Right ventricle myocardium inferior (tissue), 1 donor: ENCODE measurements at regions of chr19 and their contacts with region 1.

Region 1: DNA sequence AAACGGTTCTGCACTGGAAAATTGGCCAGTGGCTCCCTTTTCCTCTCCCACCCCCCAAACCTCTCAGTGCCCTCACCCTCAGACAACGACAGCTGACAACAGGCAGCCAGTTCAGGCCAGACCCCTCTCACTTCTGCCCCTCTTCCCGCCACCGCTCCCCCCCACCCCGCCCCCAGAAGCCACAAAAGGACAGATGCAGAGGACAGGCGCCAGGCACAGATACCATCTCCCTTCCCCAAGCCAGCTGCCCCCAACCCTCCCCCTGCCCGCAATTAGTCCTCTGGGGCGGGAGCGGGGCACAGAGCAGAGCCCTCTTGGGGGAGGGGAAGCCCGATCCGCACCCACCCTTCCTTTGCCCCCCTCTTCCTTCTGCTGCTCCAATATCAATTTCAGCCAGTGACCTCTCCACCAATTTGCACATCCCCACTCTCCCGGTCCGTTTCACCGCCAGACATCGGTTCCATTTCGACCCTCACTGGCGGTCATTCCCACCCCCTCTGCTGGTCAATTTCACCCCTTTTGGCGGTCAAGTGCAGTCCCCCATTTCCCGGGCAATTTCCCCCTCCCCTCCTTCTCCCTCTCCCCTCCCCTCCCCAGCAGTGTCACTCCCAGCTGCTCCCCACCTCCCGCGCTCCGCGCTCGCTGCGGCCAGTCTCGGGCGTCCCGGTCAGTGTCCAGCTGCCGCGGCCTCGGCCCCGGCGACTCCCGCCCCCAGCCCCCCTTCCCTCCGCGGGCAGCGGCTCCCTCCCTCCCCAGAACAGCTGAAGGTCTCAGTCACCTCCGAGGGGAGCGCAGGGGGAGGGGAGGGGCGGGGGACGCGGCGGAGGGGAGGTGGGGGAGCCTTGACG is at the start of gene SHD:
- DNase-seq: peak; percentile 0
- ATAC-seq: no peak
- total RNA-seq, gene SHD: not detected

Region 2: GRCh38 chr19:4267101-4267900 is 11.3 kb before region 1 on chr19:
- intact Hi-C with region 1: no loop called
- DNase-seq: peak; percentile 79
- ATAC-seq: peak; percentile 63

Region 3: DNA sequence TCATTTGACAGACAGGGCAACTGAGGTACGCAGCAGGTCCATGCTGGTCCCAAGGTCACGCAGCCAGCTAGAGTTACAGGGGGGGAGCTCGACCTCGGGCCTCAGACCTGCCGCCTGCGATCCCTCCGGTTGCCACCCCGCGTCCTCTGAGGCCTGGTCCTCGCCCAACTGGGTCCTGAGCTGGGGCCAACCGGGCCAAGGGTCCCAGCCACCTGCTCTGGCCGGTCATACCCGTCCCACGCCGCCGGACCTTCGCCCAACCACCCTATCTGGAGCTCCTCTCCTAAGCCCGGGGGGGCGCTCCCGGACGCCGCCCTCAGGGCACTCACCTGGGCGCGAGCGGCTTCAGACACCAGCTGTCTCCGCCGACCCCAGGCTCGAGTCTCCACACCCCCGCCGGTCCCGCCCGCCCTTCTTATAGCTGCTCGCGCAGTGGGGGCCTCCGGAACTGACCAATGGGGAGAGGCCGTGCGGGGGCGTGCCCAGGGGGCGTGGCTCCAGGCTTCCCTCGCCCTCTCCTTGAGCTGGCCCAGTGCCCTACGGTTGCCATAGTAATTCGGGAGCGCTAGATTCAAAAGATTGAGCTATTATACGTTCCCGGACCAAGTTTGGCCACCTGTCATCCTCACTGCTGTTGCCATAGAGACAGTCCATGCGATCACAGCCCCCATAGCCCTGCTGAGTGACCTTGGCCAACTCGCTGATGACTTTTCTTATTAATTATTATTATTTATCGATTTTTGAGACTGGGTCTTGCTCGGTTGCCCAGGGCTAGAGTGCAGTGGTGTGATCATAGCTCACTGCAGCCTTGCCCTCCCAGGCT is 256.4 kb after region 1 on chr19 and contains the start of gene PLIN5:
- intact Hi-C with region 1: loop called (anchors 10 kb)
- DNase-seq: peak; percentile 91
- ATAC-seq: peak; percentile 88
- total RNA-seq, gene PLIN5: 50.4 TPM